Gastrocnemius medialis (tissue), 4 donors: ENCODE measurements at regions of chr13 and their contacts with region 1.

Region 1: GRCh38 chr13:110412132-110412914 is 105.2 kb downstream of the COL4A2 start:
- DNase-seq: peak; percentile 87 to 93
- ATAC-seq: peak; percentile 88
- H3K4me3 ChIP-seq: peak overlapping the region in 1 of 4 donors; percentile 22
- H3K27ac ChIP-seq: peak overlapping the region; percentile 75 to 87 (median 80)
- H3K4me1 ChIP-seq: peaks cover 59 to 61% of the 10 kb centered on the region in 2 donors
- H3K27me3 ChIP-seq: no peaks in the 10 kb centered on the region
- CTCF ChIP-seq: peak; percentile 81 to 93 (median 84)
- POLR2A ChIP-seq: no peak

Region 2: DNA sequence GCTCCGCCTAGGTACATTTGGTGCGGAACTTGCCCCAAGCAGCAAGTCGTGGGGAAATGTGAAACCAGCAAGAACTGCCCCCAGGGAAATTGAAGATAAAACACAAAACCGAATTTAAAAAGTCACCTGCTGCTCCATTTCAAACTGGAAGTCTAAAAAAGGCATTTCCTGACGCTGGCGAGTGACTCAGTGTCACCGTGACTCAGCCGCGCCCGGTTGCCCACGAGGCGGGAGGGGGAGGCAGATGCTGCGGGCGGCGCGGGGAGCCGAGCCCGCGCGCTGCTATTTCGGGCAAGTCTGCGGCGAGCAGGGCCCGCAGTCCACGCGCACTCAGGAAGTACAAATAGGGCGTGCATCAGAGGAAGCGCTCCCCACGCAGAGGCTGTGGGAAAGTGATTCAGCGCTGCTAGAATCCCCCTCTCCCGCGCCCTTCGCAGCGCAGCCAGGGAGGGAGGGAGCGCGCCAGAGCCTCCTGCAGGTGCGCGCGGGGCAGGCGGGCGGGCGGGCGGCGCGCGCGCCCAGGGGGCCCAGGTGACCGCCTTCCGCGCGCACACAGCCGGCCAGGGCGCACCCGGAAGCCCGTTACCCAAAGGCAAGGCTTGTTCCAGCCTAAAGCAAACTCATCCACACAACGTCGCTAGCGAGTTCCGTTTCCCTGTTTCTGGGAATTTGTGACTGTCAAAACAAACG is 274.2 kb before region 1 on chr13:
- in situ Hi-C with region 1: no loop called
- intact Hi-C with region 1: loop called (anchors 5 kb)
- DNase-seq: peak; percentile 72 to 75
- ATAC-seq: peak; percentile 67 to 68
- H3K4me3 ChIP-seq: peak overlapping the region; percentile 53 to 81 (median 60)
- H3K27ac ChIP-seq: peak overlapping the region; percentile 85 to 95 (median 89)
- H3K4me1 ChIP-seq: peaks cover 41 to 43% of the 10 kb centered on the region in 2 donors
- H3K27me3 ChIP-seq: no peaks in the 10 kb centered on the region
- CTCF ChIP-seq: peak in 2 of 5 experiments; percentile 14 to 17
- POLR2A ChIP-seq: peak; percentile 55 to 65

Region 3: GRCh38 chr13:110225609-110226562 is 186.4 kb before region 1 on chr13:
- in situ Hi-C with region 1: loop called (anchors 5 to 25 kb)
- intact Hi-C with region 1: loop called (anchors 1 kb)
- DNase-seq: no peak
- ATAC-seq: no peak
- H3K4me3 ChIP-seq: no peak overlapping the region
- H3K27ac ChIP-seq: peak overlapping the region; percentile 41 to 69 (median 55)
- H3K4me1 ChIP-seq: peaks cover 11 to 16% of the 10 kb centered on the region in 2 donors
- H3K27me3 ChIP-seq: no peaks in the 10 kb centered on the region
- CTCF ChIP-seq: no peak
- POLR2A ChIP-seq: no peak

Region 4: GRCh38 chr13:110306960-110307746 is 105.2 kb before region 1 on chr13 and contains the starts of genes COL4A1 and COL4A2:
- in situ Hi-C with region 1: loop called in 1 of 4 experiments (anchors 10 kb)
- intact Hi-C with region 1: loop called (anchors 1 kb)
- DNase-seq: peak; percentile 35 to 47
- ATAC-seq: peak; percentile 59 to 61
- H3K4me3 ChIP-seq: peak within 1 kb of the TSS; percentile 64 to 78 (median 73)
- H3K27ac ChIP-seq: peak within 1 kb of the TSS; percentile 84 to 88 (median 86)
- H3K4me1 ChIP-seq: peaks cover 7 to 20% of the 10 kb centered on the region in 2 donors
- H3K27me3 ChIP-seq: peaks cover 16 to 50% (median 25%) of the 10 kb centered on the region in 3 donors
- CTCF ChIP-seq: no peak
- POLR2A ChIP-seq: peak; percentile 81 to 93
- total RNA-seq, gene COL4A1: 60.5 to 127 (median 120) TPM
- total RNA-seq, gene COL4A2: 51.2 to 85.8 (median 70.5) TPM

Region 5: DNA sequence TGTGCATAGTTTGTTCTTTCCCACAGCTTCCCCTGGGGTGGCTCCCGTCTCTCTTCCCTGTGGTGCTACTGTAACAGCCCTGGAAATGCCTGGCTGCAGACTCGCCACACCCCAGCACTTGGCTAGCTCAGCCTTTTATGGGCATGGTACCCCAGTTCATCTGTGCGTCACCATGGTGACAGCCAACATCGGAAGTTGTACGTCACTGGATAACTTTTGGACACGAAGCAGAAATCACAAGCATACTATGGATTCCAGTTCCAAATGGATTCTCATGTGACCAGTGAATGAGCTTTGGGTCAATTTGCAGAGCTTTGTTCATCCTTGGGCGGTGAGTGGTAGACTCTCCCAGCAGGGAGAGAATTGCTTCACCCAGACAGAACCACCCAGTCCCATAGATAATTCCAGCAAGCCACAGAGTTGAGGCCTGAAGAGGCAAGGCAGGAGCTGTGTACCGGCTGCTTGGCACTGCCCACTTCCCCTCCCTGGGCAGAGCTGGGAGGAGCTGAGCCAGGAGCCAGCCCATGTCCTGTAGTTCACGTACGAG is 50.9 kb before region 1 on chr13:
- in situ Hi-C with region 1: no loop called
- intact Hi-C with region 1: no loop called
- DNase-seq: peak in 1 of 2 donors; percentile 55
- ATAC-seq: peak; percentile 54 to 64
- H3K4me3 ChIP-seq: no peak overlapping the region
- H3K27ac ChIP-seq: peak overlapping the region; percentile 45 to 66 (median 56)
- H3K4me1 ChIP-seq: peaks cover 13 to 17% of the 10 kb centered on the region in 2 donors
- H3K27me3 ChIP-seq: no peaks in the 10 kb centered on the region
- CTCF ChIP-seq: no peak
- POLR2A ChIP-seq: no peak

Region 6: GRCh38 chr13:110525328-110526319 is 113.3 kb after region 1 on chr13:
- in situ Hi-C with region 1: no loop called
- intact Hi-C with region 1: loop called (anchors 5 kb)
- DNase-seq: peak in 1 of 2 donors; percentile 46
- ATAC-seq: peak in 1 of 2 donors; percentile 39
- H3K4me3 ChIP-seq: no peak overlapping the region
- H3K27ac ChIP-seq: peak overlapping the region in 3 of 4 donors; percentile 29 to 85 (median 64)
- H3K4me1 ChIP-seq: peaks cover 7 to 41% of the 10 kb centered on the region in 2 donors
- H3K27me3 ChIP-seq: no peaks in the 10 kb centered on the region
- CTCF ChIP-seq: no peak
- POLR2A ChIP-seq: no peak